ENCODE measurements at regions of chr1 and their contacts with region 1.

Region 1: GRCh38 chr1:210311726-210312493 is 16.8 kb upstream of the HHAT start:
- DNase-seq: no peak
- ATAC-seq: peak; percentile 23; the same call in 2 of the 3 replicates
- H3K4me3 ChIP-seq: no peak overlapping the region
- H3K27ac ChIP-seq: no peak overlapping the region
- H3K4me1 ChIP-seq: peaks cover 0 to 6% of the 10 kb centered on the region in 2 experiments; a peak in 2 of 5 replicates
- H3K27me3 ChIP-seq: no peaks in the 10 kb centered on the region; a peak in 2 of 5 replicates
- CTCF ChIP-seq: no peak
- EP300 ChIP-seq: no peak
- POLR2A ChIP-seq: no peak
- RAD21 ChIP-seq: no peak

Region 2: GRCh38 chr1:209850342-209850979 is 461.4 kb before region 1 on chr1:
- CTCF ChIA-PET with region 1: no interaction called
- POLR2A ChIA-PET with region 1: no interaction called
- in situ Hi-C with region 1: loop called (anchors 10 kb)
- intact Hi-C with region 1: no loop called
- DNase-seq: peak; percentile 68 to 79 (median 73)
- ATAC-seq: peak; percentile 98
- H3K4me3 ChIP-seq: no peak overlapping the region
- H3K27ac ChIP-seq: no peak overlapping the region
- H3K4me1 ChIP-seq: no peaks in the 10 kb centered on the region
- H3K27me3 ChIP-seq: no peaks in the 10 kb centered on the region
- CTCF ChIP-seq: peak; percentile 71 to 94 (median 79)
- EP300 ChIP-seq: no peak
- POLR2A ChIP-seq: no peak
- RAD21 ChIP-seq: peak; percentile 46 to 61

Region 3: GRCh38 chr1:209860293-209860881 is 451.5 kb before region 1 on chr1:
- CTCF ChIA-PET with region 1: interaction called, 8 read pairs
- POLR2A ChIA-PET with region 1: no interaction called
- in situ Hi-C with region 1: loop called (anchors 10 kb)
- intact Hi-C with region 1: loop called (anchors 1 kb)
- DNase-seq: peak; percentile 84 to 92 (median 91)
- ATAC-seq: peak; percentile 99
- H3K4me3 ChIP-seq: no peak overlapping the region
- H3K27ac ChIP-seq: no peak overlapping the region
- H3K4me1 ChIP-seq: no peaks in the 10 kb centered on the region
- H3K27me3 ChIP-seq: peaks cover 2 to 14% of the 10 kb centered on the region in 2 experiments; a peak in 3 of 5 replicates
- CTCF ChIP-seq: peak; percentile 89 to 94 (median 91)
- EP300 ChIP-seq: no peak
- POLR2A ChIP-seq: no peak
- RAD21 ChIP-seq: peak; percentile 92 to 96

Region 4: DNA sequence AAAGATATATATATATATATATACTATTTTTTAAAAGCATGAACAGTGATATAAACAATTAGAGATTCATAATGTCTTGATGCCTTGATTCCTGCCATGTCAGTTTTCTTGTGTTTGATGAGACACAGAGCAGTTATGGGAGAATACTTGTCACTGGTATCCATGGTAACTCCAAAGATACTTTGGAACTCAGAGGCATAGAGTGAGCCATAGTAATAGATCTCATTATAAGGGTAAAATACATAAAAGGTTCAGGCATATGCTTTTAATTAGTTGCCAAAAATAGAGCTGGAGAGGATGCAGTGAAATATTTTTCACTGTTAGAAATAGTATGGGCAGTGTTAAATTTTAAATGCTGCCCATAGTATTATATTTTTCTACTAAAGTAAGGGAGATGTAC is 239.8 kb before region 1 on chr1:
- CTCF ChIA-PET with region 1: no interaction called
- POLR2A ChIA-PET with region 1: no interaction called
- in situ Hi-C with region 1: no loop called
- intact Hi-C with region 1: no loop called
- DNase-seq: no peak
- ATAC-seq: no peak
- H3K4me3 ChIP-seq: no peak overlapping the region
- H3K27ac ChIP-seq: no peak overlapping the region
- H3K4me1 ChIP-seq: no peaks in the 10 kb centered on the region; a peak in 1 of 5 replicates
- H3K27me3 ChIP-seq: no peaks in the 10 kb centered on the region
- CTCF ChIP-seq: no peak
- EP300 ChIP-seq: no peak
- POLR2A ChIP-seq: no peak
- RAD21 ChIP-seq: no peak

Region 5: DNA sequence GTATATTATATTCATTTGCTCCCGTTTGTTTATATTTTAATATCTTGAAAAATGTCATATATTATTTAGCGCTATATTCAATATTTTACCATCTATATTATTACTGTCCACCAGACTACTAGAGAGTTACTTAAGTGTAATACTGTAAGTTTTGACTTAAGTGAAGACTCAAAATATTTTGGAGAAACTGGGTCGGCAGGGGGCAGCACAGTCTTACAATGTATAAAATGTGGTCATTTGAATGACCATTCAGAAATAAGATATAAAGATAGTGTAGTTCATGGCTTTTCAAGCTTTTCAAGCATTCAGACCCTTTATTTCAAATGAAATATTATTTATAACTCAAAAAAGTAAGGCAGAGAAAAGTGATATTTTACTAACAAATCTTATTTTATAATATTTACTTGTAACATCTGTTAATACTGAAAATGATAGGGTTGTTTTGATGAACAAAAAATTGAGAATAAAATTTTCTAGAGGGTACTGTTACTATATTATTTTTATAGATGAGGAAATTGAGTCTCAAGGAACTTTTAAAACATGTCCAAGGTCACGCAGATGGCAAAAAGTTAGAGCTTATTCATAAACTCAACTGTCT is 168.3 kb before region 1 on chr1:
- CTCF ChIA-PET with region 1: interaction called, 8 read pairs
- POLR2A ChIA-PET with region 1: no interaction called
- in situ Hi-C with region 1: no loop called
- intact Hi-C with region 1: loop called (anchors 1 kb)
- DNase-seq: peak; percentile 40 to 73 (median 45)
- ATAC-seq: peak; percentile 64
- H3K4me3 ChIP-seq: no peak overlapping the region
- H3K27ac ChIP-seq: no peak overlapping the region
- H3K4me1 ChIP-seq: no peaks in the 10 kb centered on the region
- H3K27me3 ChIP-seq: no peaks in the 10 kb centered on the region
- CTCF ChIP-seq: peak; percentile 47 to 75 (median 49); a peak in 4 of 6 replicates
- EP300 ChIP-seq: no peak
- POLR2A ChIP-seq: no peak
- RAD21 ChIP-seq: peak; percentile 81

Region 6: GRCh38 chr1:210328746-210329503 is 17.0 kb after region 1 on chr1 and contains the start of gene HHAT:
- CTCF ChIA-PET with region 1: no interaction called
- POLR2A ChIA-PET with region 1: no interaction called
- in situ Hi-C with region 1: no loop called
- intact Hi-C with region 1: no loop called
- DNase-seq: peak in 2 of 4 experiments; percentile 0 to 12
- ATAC-seq: no peak; the same call in 2 of the 3 replicates
- H3K4me3 ChIP-seq: peak within 1 kb of the TSS; percentile 6; the same call in 1 of the 2 replicates
- H3K27ac ChIP-seq: no peak within 1 kb of the TSS
- H3K4me1 ChIP-seq: peaks cover 3 to 10% of the 10 kb centered on the region in 2 experiments; a peak in 2 of 5 replicates
- H3K27me3 ChIP-seq: peaks cover 0 to 17% of the 10 kb centered on the region in 2 experiments; a peak in 2 of 5 replicates
- CTCF ChIP-seq: no peak
- EP300 ChIP-seq: no peak
- POLR2A ChIP-seq: no peak
- RAD21 ChIP-seq: no peak
- polyA plus RNA-seq, gene HHAT: 0.07 to 0.13 TPM

Measured in K562 (cell line).